IMR-90 (cell line): ENCODE measurements at regions of chr2 and their contacts with region 1.

Region 1: DNA sequence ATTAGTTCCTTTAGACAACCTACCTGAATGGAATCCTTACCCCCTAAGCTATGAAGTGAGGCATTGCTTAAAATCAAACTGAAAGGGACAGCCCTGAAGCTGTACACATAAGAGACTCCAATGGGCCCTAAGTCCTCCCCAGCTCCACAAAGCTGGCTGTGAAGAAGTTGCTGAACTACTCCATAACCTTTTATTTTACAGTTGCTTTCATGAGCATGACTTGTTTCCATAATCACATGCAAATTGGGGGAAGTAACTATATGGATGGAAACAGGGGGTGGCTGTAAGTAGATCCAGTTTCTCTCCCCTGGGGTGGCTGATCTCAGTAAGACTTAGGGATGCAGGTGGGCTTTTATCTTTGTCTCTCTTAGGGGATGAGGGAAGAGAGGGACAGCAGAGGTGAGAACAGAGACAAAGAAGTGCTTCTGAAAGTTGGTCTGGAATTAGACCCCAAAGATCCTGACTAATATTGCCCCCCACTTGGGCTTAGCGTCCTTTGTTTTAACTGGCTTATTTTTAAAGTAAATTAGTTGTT is 5.5 kb downstream of the FZD5 start:
- DNase-seq: no peak
- ATAC-seq: no peak
- H3K4me3 ChIP-seq: no peak overlapping the region
- H3K27ac ChIP-seq: no peak overlapping the region
- H3K4me1 ChIP-seq: peaks cover 7% of the 10 kb centered on the region; the same call in 1 of the 2 replicates
- H3K27me3 ChIP-seq: peaks cover 1% of the 10 kb centered on the region; the same call in 1 of the 2 replicates
- CTCF ChIP-seq: no peak
- POLR2A ChIP-seq: no peak
- RAD21 ChIP-seq: no peak

Region 2: GRCh38 chr2:207499114-207499513 is 265.0 kb before region 1 on chr2:
- CTCF ChIA-PET with region 1: interaction called, 10 read pairs
- POLR2A ChIA-PET with region 1: no interaction called
- dilution Hi-C with region 1: no loop called
- in situ Hi-C with region 1: no loop called
- intact Hi-C with region 1: no loop called
- DNase-seq: no peak
- ATAC-seq: no peak
- H3K4me3 ChIP-seq: no peak overlapping the region
- H3K27ac ChIP-seq: no peak overlapping the region
- H3K4me1 ChIP-seq: peaks cover 3% of the 10 kb centered on the region
- H3K27me3 ChIP-seq: no peaks in the 10 kb centered on the region
- CTCF ChIP-seq: no peak
- POLR2A ChIP-seq: no peak
- RAD21 ChIP-seq: no peak

Region 3: DNA sequence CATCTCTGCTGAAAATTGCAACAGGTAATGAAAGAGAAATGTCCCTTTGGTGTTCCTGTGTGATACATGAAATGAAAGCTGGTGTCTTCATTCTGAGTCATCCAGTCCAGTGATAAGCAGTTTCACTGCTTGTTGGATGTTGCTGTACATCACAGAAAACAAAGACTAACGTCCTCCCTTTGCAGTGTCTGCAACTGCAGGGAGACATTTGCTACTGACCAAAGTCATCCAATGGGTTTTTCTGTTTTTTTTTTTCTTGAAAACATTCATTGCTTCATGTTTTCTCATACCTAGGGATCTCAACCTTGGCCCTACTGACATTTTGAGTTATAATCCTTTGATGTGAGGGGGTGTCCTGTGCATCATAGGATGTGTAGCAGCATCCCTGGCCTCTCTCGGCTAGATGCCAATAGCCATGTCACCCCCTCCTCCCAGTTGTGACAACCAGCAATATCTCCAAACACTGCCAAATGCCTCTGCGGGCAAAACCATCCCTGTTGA is 69.1 kb after region 1 on chr2:
- CTCF ChIA-PET with region 1: no interaction called
- POLR2A ChIA-PET with region 1: no interaction called
- dilution Hi-C with region 1: no loop called
- in situ Hi-C with region 1: no loop called
- intact Hi-C with region 1: no loop called
- DNase-seq: peak; percentile 24
- ATAC-seq: no peak
- H3K4me3 ChIP-seq: no peak overlapping the region
- H3K27ac ChIP-seq: no peak overlapping the region
- H3K4me1 ChIP-seq: peaks cover 6% of the 10 kb centered on the region; the same call in 1 of the 2 replicates
- H3K27me3 ChIP-seq: no peaks in the 10 kb centered on the region
- CTCF ChIP-seq: no peak
- POLR2A ChIP-seq: no peak
- RAD21 ChIP-seq: no peak

Region 4: GRCh38 chr2:208208335-208209085 is 444.3 kb after region 1 on chr2:
- CTCF ChIA-PET with region 1: no interaction called
- POLR2A ChIA-PET with region 1: no interaction called
- dilution Hi-C with region 1: no loop called
- in situ Hi-C with region 1: no loop called
- intact Hi-C with region 1: no loop called
- DNase-seq: no peak
- ATAC-seq: no peak
- H3K4me3 ChIP-seq: no peak overlapping the region
- H3K27ac ChIP-seq: no peak overlapping the region
- H3K4me1 ChIP-seq: no peaks in the 10 kb centered on the region
- H3K27me3 ChIP-seq: no peaks in the 10 kb centered on the region; the same call in 1 of the 2 replicates
- CTCF ChIP-seq: no peak
- POLR2A ChIP-seq: no peak
- RAD21 ChIP-seq: no peak